GM12878 (cell line): ENCODE measurements at regions of chr6 and their contacts with region 1.

Region 1: GRCh38 chr6:7086488-7086887 is 21.3 kb upstream of the RREB1 start:
- DNase-seq: peak; percentile 66
- ATAC-seq: peak; percentile 86
- H3K4me3 ChIP-seq: peak overlapping the region; percentile 48
- H3K27ac ChIP-seq: peak overlapping the region; percentile 38
- H3K4me1 ChIP-seq: peaks cover 18% of the 10 kb centered on the region
- H3K27me3 ChIP-seq: no peaks in the 10 kb centered on the region
- CTCF ChIP-seq: peak in 2 of 3 experiments; percentile 43 to 44; a peak in 3 of 6 replicates
- EP300 ChIP-seq: 0 out of 4 replicates have a peak, but pooled peaks of 1 of the 2 experiments have one; percentile 9
- POLR2A ChIP-seq: no peak
- RAD21 ChIP-seq: peak; percentile 72

Region 2: GRCh38 chr6:6758915-6759654 is 327.4 kb before region 1 on chr6:
- CTCF ChIA-PET with region 1: interaction called, 3 read pairs
- POLR2A ChIA-PET with region 1: no interaction called
- RAD21 ChIA-PET with region 1: interaction called, 11 read pairs
- SMC1A ChIA-PET with region 1: interaction called, 3 read pairs
- in situ Hi-C with region 1: no loop called
- intact Hi-C with region 1: no loop called
- DNase-seq: peak; percentile 13
- ATAC-seq: peak; percentile 97
- H3K4me3 ChIP-seq: no peak overlapping the region
- H3K27ac ChIP-seq: no peak overlapping the region
- H3K4me1 ChIP-seq: peaks cover 7% of the 10 kb centered on the region
- H3K27me3 ChIP-seq: no peaks in the 10 kb centered on the region
- CTCF ChIP-seq: peak; percentile 55 to 65 (median 57)
- EP300 ChIP-seq: 0 out of 4 replicates have a peak, but pooled peaks of 1 of the 2 experiments have one; percentile 29
- POLR2A ChIP-seq: no peak
- RAD21 ChIP-seq: peak; percentile 70

Region 3: GRCh38 chr6:6834356-6835222 is 251.9 kb before region 1 on chr6:
- CTCF ChIA-PET with region 1: no interaction called
- POLR2A ChIA-PET with region 1: no interaction called
- RAD21 ChIA-PET with region 1: no interaction called
- SMC1A ChIA-PET with region 1: no interaction called
- in situ Hi-C with region 1: no loop called
- intact Hi-C with region 1: no loop called
- DNase-seq: no peak
- ATAC-seq: no peak
- H3K4me3 ChIP-seq: no peak overlapping the region
- H3K27ac ChIP-seq: no peak overlapping the region
- H3K4me1 ChIP-seq: no peaks in the 10 kb centered on the region
- H3K27me3 ChIP-seq: no peaks in the 10 kb centered on the region
- CTCF ChIP-seq: no peak
- EP300 ChIP-seq: no peak
- POLR2A ChIP-seq: no peak
- RAD21 ChIP-seq: no peak

Region 4: GRCh38 chr6:7073821-7074525 is 12.5 kb before region 1 on chr6:
- CTCF ChIA-PET with region 1: interaction called, 15 read pairs
- POLR2A ChIA-PET with region 1: no interaction called
- RAD21 ChIA-PET with region 1: interaction called, 18 read pairs
- SMC1A ChIA-PET with region 1: interaction called, 15 read pairs
- in situ Hi-C with region 1: no loop called
- intact Hi-C with region 1: no loop called
- DNase-seq: peak; percentile 92
- ATAC-seq: peak; percentile 100
- H3K4me3 ChIP-seq: no peak overlapping the region
- H3K27ac ChIP-seq: no peak overlapping the region
- H3K4me1 ChIP-seq: peaks cover 7% of the 10 kb centered on the region
- H3K27me3 ChIP-seq: no peaks in the 10 kb centered on the region
- CTCF ChIP-seq: no peak
- EP300 ChIP-seq: peak; percentile 84 to 91
- POLR2A ChIP-seq: no peak
- RAD21 ChIP-seq: peak; percentile 13; the same call in 1 of the 2 replicates

Region 5: DNA sequence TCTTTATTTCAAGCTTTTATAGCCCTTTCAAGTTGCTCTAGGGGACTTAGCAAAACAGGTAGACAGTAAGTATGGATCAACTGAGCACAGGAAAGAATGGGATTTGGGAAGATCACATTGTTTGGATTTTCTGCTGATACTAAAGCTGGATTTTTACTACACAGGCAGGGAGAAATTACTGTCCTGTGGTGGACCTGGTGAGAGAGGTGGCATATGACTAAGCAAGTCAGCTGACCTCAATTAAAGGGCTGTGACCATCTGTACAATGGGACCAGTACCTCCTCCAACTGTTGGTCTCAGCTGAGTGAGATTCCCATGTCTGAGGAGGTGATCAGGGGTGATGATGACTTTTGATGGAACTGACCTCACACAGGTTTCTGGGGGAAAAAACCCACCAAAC is 49.3 kb after region 1 on chr6:
- CTCF ChIA-PET with region 1: interaction called, 12 read pairs
- POLR2A ChIA-PET with region 1: no interaction called
- RAD21 ChIA-PET with region 1: interaction called, 28 read pairs
- SMC1A ChIA-PET with region 1: interaction called, 40 read pairs
- in situ Hi-C with region 1: no loop called
- intact Hi-C with region 1: no loop called
- DNase-seq: no peak
- ATAC-seq: peak; percentile 64
- H3K4me3 ChIP-seq: peak overlapping the region; percentile 41
- H3K27ac ChIP-seq: peak overlapping the region; percentile 88
- H3K4me1 ChIP-seq: peaks cover 77% of the 10 kb centered on the region
- H3K27me3 ChIP-seq: no peaks in the 10 kb centered on the region
- CTCF ChIP-seq: no peak
- EP300 ChIP-seq: 0 out of 4 replicates have a peak, but pooled peaks of 1 of the 2 experiments have one; percentile 18
- POLR2A ChIP-seq: no peak
- RAD21 ChIP-seq: no peak

Region 6: GRCh38 chr6:7154341-7155139 is 68.1 kb after region 1 on chr6:
- CTCF ChIA-PET with region 1: interaction called, 13 read pairs
- POLR2A ChIA-PET with region 1: interaction called, 4 read pairs
- RAD21 ChIA-PET with region 1: interaction called, 26 read pairs
- SMC1A ChIA-PET with region 1: interaction called, 23 read pairs
- in situ Hi-C with region 1: no loop called
- intact Hi-C with region 1: no loop called
- DNase-seq: peak; percentile 80
- ATAC-seq: peak; percentile 84
- H3K4me3 ChIP-seq: peak overlapping the region; percentile 58; the same call in 1 of the 2 replicates
- H3K27ac ChIP-seq: peak overlapping the region; percentile 93
- H3K4me1 ChIP-seq: peaks cover 80% of the 10 kb centered on the region
- H3K27me3 ChIP-seq: no peaks in the 10 kb centered on the region
- CTCF ChIP-seq: no peak
- EP300 ChIP-seq: peak; percentile 88 to 92; a peak in 3 of 4 replicates
- POLR2A ChIP-seq: peak; percentile 51; the same call in 1 of the 2 replicates
- RAD21 ChIP-seq: no peak

Region 7: GRCh38 chr6:7431674-7432390 is 345.3 kb after region 1 on chr6:
- CTCF ChIA-PET with region 1: no interaction called
- POLR2A ChIA-PET with region 1: no interaction called
- RAD21 ChIA-PET with region 1: no interaction called
- SMC1A ChIA-PET with region 1: no interaction called
- in situ Hi-C with region 1: no loop called
- intact Hi-C with region 1: no loop called
- DNase-seq: no peak
- ATAC-seq: no peak
- H3K4me3 ChIP-seq: no peak overlapping the region
- H3K27ac ChIP-seq: no peak overlapping the region
- H3K4me1 ChIP-seq: no peaks in the 10 kb centered on the region
- H3K27me3 ChIP-seq: no peaks in the 10 kb centered on the region; a peak in 1 of 4 replicates
- CTCF ChIP-seq: no peak
- EP300 ChIP-seq: no peak
- POLR2A ChIP-seq: no peak
- RAD21 ChIP-seq: no peak